PC-3 (cell line): ENCODE measurements at regions of chr4 and their contacts with region 1.

Region 1: GRCh38 chr4:159413306-159413943 is 310.5 kb downstream of the RAPGEF2 start:
- DNase-seq: peak; percentile 59
- ATAC-seq: no peak
- H3K4me3 ChIP-seq: no peak overlapping the region
- H3K27ac ChIP-seq: peak overlapping the region; percentile 46
- H3K4me1 ChIP-seq: peaks cover 64% of the 10 kb centered on the region
- H3K27me3 ChIP-seq: no peaks in the 10 kb centered on the region
- CTCF ChIP-seq: no peak

Region 2: DNA sequence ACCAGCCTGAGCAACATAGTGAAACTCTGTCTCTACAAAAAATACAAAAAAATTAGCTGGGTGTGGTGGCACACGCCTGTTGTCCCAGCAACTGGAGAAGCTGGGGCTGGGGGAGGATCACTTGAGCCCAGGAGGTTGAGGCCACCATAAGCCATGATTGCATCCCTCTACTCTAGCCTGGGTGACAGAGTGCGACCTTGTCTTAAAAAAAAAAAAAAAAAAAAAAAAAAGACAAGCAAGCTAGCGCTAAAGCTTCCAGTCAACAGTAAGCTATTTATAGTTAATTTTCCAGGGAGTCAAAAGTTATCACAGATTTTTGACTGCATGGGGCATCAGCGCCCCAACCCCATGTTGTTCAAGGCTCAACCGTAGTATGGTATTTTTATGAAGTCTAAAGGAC is 37.1 kb before region 1 on chr4:
- CTCF ChIA-PET with region 1: no interaction called
- POLR2A ChIA-PET with region 1: interaction called, 12 read pairs
- intact Hi-C with region 1: no loop called
- DNase-seq: no peak
- ATAC-seq: no peak
- H3K4me3 ChIP-seq: no peak overlapping the region
- H3K27ac ChIP-seq: no peak overlapping the region
- H3K4me1 ChIP-seq: no peaks in the 10 kb centered on the region
- H3K27me3 ChIP-seq: no peaks in the 10 kb centered on the region
- CTCF ChIP-seq: no peak

Region 3: GRCh38 chr4:159390648-159391047 is 22.8 kb before region 1 on chr4:
- CTCF ChIA-PET with region 1: no interaction called
- POLR2A ChIA-PET with region 1: no interaction called
- intact Hi-C with region 1: loop called (anchors 1 kb)
- DNase-seq: peak; percentile 97
- ATAC-seq: peak; percentile 96
- H3K4me3 ChIP-seq: no peak overlapping the region
- H3K27ac ChIP-seq: peak overlapping the region; percentile 76
- H3K4me1 ChIP-seq: peaks cover 11% of the 10 kb centered on the region
- H3K27me3 ChIP-seq: no peaks in the 10 kb centered on the region
- CTCF ChIP-seq: no peak

Region 4: DNA sequence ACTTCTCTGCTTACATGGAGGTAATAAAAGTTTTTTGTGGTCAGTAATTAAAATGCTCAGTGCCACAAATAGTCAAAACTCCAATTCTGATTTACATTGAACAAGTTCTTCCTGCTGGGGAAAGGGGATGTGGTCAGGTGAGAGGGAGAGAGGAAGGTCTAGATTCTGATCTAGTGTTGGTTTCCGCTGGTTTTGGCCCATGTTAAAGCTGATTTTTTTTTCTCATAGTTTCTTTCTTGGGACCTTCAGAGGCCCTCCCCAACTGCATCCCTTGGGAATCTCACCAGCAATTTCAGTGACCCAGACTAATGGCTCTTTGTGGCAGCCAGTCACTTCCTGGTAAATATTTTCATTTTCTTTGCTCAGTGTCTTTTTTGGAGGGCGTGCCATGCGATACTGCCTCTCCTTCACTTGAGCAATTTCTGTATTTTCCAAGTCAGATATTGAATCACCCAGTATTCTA is 22.2 kb after region 1 on chr4:
- CTCF ChIA-PET with region 1: no interaction called
- POLR2A ChIA-PET with region 1: no interaction called
- intact Hi-C with region 1: loop called (anchors 1 kb)
- DNase-seq: peak; percentile 80
- ATAC-seq: peak; percentile 92
- H3K4me3 ChIP-seq: peak overlapping the region; percentile 11; the same call in 1 of the 2 replicates
- H3K27ac ChIP-seq: peak overlapping the region; percentile 91
- H3K4me1 ChIP-seq: peaks cover 25% of the 10 kb centered on the region
- H3K27me3 ChIP-seq: no peaks in the 10 kb centered on the region
- CTCF ChIP-seq: no peak

Region 5: DNA sequence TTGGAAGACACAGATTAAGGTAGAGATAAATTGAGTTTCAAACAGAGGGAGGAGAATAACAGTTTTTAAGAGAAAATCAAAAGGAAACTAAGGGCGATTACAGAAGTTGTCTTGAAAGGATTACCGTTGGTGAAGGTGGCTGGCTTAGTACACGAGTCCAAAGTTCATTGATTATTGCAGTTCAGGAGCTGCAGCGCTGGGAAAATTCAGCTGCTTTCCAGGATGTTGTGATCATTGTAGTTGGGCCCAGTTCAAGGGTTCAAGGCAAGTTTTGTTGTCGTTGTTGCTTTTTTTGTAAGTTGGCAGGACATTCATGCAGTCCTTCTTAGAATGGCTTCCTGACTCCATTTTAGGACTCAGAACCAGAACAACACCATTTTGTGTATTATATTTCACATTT is 151.2 kb after region 1 on chr4:
- CTCF ChIA-PET with region 1: no interaction called
- POLR2A ChIA-PET with region 1: no interaction called
- intact Hi-C with region 1: no loop called
- DNase-seq: no peak
- ATAC-seq: no peak
- H3K4me3 ChIP-seq: no peak overlapping the region
- H3K27ac ChIP-seq: no peak overlapping the region
- H3K4me1 ChIP-seq: no peaks in the 10 kb centered on the region
- H3K27me3 ChIP-seq: no peaks in the 10 kb centered on the region
- CTCF ChIP-seq: no peak